ENCODE measurements at regions of chr14 and their contacts with region 1.

Region 1: DNA sequence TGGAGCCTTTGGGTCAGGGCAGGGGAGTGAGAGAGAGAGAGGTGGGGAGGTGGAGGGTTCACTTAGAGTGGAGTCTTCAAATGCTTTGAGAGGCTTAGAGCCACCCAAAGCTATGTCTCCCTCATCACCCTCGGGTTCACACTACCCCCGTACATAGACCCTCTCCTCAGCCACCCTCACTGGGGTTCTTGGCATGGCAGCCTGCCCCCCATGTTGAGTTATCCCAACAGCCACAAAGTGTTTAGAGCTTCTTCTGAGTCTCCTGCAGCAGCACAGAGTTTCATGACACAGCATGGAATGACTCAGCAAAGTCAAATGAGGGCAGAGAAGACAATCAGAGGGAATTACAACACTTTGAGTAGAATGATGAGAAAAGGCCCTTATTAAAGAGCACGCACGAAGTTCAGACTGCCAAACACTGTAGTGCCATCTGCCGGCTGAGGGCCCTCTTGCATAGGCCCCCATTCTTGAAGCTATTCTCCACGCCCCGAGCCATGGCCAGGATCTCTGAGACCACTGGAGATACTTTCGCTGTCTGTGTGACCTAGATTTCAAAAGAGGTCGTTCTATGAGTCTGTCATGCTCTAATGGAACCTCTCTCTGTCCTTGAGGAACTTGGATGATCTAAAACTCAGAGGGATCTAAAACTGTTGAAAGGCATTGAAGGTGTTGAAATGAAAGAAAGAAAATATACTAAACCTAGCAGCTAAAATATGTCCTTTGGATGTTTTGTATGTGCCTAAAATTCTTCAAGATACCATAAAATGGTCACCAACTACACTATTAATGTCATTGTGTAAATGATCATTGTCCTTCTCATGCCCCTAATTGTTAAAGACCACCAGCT is 221.9 kb downstream of the PELI2 start:
- DNase-seq: peak; percentile 66 to 87 (median 74)
- H3K4me3 ChIP-seq: no peak overlapping the region
- H3K27ac ChIP-seq: peak overlapping the region in 1 of 59 donors; percentile 20
- H3K27me3 ChIP-seq: no peaks in the 10 kb centered on the region
- CTCF ChIP-seq: peak; percentile 72 to 98 (median 90)

Region 2: DNA sequence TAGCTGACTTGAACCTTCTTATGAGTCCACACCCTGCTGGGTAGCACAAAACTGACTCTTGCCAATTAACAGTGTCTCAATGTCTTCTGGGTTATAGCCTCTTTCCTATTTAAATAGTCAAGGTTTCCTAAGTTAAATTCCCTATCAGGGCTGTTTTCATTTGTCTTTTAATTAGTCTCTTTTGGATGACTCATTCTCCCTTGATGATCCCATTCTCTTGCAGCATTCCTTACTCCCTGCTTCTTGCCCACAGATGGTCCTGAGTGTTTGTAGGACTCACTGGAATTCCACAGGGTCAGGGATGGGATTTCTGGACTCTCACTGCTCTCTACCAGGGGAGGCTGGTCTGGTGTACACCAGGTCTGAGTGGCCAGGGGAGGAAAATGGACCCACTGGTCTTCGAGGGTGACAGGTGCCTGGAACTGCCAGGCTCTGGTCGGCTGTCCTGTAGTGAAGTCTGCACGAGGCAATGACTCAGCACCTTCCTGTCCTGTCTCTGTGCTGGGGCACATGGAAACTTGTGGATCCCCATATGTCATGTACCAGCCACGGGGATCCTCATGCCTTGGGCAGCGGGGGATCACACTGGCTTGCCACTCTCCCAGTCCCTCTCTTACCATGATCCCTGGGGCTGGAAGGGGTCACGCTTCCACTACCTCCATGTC is 458.4 kb before region 1 on chr14:
- intact Hi-C with region 1: loop called in 1 of 2 experiments (anchors 10 kb)
- DNase-seq: no peak
- H3K4me3 ChIP-seq: no peak overlapping the region
- H3K27ac ChIP-seq: no peak overlapping the region
- H3K27me3 ChIP-seq: no peaks in the 10 kb centered on the region
- CTCF ChIP-seq: no peak

Region 3: GRCh38 chr14:56262530-56262929 is 77.5 kb before region 1 on chr14:
- intact Hi-C with region 1: no loop called
- DNase-seq: no peak
- H3K4me3 ChIP-seq: no peak overlapping the region
- H3K27ac ChIP-seq: no peak overlapping the region
- H3K27me3 ChIP-seq: no peaks in the 10 kb centered on the region
- CTCF ChIP-seq: no peak

Measured in dorsolateral prefrontal cortex (tissue), 120 donors.